Mammary epithelial cell (primary cell): ENCODE measurements at regions of chr19 and their contacts with region 1.

Region 1: DNA sequence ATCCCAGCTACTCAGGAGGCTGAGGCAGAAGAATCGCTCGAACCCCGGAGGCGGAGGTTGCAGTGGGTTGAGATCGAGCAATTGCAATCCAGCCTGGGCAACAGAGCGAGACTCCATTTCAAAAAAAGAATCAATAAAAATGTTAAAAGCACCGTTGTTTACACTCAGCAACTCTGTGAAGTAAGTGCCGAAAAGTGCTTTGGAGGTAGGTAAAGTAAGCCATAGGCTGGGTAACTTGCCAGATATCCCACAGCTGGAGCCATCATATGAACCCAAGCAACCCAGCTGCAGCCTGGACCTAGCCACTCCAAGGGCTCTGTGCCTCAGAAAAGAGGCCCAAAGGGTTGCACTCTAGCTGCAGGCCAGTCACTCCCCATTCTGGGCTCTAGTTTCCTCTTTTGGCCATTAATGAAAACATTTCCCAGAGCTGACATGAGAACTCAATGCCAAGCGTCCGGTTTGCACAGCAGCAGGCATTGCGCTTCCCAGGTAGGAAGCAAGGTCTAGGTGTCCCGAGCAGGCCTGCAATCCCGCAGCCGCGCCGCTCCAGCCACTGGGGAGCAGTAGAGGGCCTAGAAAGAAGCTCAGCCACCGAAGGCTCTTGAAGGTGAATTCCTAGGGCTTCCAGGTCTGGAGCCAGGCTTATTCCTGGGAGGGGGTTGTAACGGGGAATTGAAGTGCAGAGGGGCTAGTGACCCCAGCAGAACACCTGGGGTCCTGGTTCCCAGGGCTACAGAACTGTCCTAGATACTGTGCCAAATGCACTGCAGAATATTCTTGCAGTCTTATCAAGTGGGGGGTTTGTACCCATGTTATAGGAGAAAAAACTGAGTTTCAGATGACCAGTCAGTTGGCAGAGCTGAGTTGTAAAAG is 4.1 kb upstream of the CD79A start:
- DNase-seq: peak; percentile 77
- H3K4me3 ChIP-seq: no peak overlapping the region
- H3K27ac ChIP-seq: no peak overlapping the region
- H3K4me1 ChIP-seq: no peaks in the 10 kb centered on the region
- H3K27me3 ChIP-seq: no peaks in the 10 kb centered on the region
- CTCF ChIP-seq: peak; percentile 79 to 83

Region 2: GRCh38 chr19:41541990-41542584 is 330.9 kb before region 1 on chr19:
- CTCF ChIA-PET with region 1: no interaction called
- dilution Hi-C with region 1: no loop called
- in situ Hi-C with region 1: no loop called
- intact Hi-C with region 1: no loop called
- DNase-seq: peak; percentile 14
- H3K4me3 ChIP-seq: no peak overlapping the region
- H3K27ac ChIP-seq: no peak overlapping the region
- H3K4me1 ChIP-seq: no peaks in the 10 kb centered on the region
- H3K27me3 ChIP-seq: peaks cover 3% of the 10 kb centered on the region
- CTCF ChIP-seq: peak; percentile 62 to 66

Region 3: DNA sequence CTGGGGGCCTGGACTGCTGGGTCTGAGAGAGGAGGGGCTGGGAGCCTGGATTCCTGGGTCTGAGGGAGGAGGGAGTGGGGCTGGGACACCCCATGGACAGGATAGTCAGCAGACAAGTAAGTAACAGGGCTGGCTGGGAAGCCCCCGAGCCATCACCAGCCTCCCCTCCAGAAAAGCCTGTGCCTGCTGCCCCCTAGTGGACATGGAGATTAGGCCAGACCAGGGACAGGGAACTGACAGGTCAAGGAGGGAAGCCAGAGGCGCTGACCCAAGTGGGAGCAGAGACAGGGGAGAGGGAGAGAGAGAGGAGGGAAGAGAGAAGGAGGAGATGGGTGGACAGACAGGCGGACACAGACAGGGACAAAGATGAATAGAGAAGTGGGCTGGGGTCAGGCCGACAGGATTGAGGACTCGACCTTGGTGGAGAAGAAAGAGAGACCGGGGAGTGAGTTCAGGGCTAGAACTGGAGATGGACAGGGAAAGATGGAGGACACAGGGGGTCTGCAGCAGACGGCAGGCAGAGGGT is 61.9 kb after region 1 on chr19:
- CTCF ChIA-PET with region 1: interaction called, 3 read pairs
- dilution Hi-C with region 1: no loop called
- in situ Hi-C with region 1: no loop called
- intact Hi-C with region 1: loop called (anchors 1 kb)
- DNase-seq: peak; percentile 44
- H3K4me3 ChIP-seq: no peak overlapping the region
- H3K27ac ChIP-seq: no peak overlapping the region
- H3K4me1 ChIP-seq: peaks cover 11% of the 10 kb centered on the region
- H3K27me3 ChIP-seq: peaks cover 24% of the 10 kb centered on the region
- CTCF ChIP-seq: peak; percentile 88 to 91

Region 4: GRCh38 chr19:42363614-42364346 is 490.8 kb after region 1 on chr19:
- CTCF ChIA-PET with region 1: no interaction called
- dilution Hi-C with region 1: no loop called
- in situ Hi-C with region 1: no loop called
- intact Hi-C with region 1: no loop called
- DNase-seq: no peak
- H3K4me3 ChIP-seq: no peak overlapping the region
- H3K27ac ChIP-seq: no peak overlapping the region
- H3K4me1 ChIP-seq: no peaks in the 10 kb centered on the region
- H3K27me3 ChIP-seq: no peaks in the 10 kb centered on the region
- CTCF ChIP-seq: no peak